H1 (cell line): ENCODE measurements at regions of chr16 and their contacts with region 1.

Region 1: GRCh38 chr16:50806099-50807062 is 64.5 kb downstream of the CYLD start:
- DNase-seq: peak; percentile 62 to 91
- H3K4me3 ChIP-seq: peak overlapping the region; percentile 18 to 53 (median 38); a peak in 7 of 8 replicates
- H3K27ac ChIP-seq: no peak overlapping the region
- H3K4me1 ChIP-seq: peaks cover 0 to 5% (median 0%) of the 10 kb centered on the region in 4 experiments; a peak in 2 of 7 replicates
- H3K27me3 ChIP-seq: no peaks in the 10 kb centered on the region
- CTCF ChIP-seq: peak; percentile 72 to 94 (median 73)
- EP300 ChIP-seq: no peak
- POLR2A ChIP-seq: no peak
- RAD21 ChIP-seq: peak; percentile 80 to 83

Region 2: DNA sequence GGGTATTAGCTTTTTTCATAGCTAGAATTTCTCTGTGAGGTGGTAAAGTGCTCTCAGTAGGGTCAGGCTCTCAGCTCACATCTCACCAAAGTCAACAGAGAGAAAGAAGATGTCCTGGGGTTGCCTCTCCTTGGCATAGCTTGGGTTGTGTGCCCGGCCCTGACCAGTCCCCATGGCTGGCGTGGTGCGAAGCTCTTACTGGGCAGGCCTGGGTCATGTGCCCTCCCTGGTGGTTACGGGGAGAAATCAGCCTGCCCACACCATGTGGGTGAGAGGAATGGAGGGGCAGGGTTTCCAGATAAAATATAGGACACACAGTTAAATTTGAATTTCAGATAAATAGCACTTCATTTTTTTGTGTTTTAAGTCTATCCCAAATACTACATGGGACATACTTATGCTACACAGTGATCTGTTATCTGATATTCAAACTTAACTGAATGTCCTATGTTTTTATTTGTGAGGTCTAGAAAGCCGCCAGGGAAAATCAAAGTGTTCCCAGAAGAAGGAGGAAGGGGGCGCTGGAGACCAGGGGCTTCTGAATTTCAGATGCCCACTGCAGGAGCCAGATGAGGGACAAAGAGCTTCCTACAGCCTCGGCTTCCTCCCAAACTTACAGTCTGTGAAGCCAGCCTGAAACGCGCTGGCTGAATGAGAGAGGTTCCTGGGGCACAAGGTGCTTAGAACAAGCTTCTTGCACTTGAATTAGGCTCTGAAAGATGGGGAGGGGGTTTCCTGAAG is 212.8 kb before region 1 on chr16:
- CTCF ChIA-PET with region 1: interaction called, 27 read pairs
- POLR2A ChIA-PET with region 1: no interaction called
- DNase-seq: peak; percentile 23 to 70
- H3K4me3 ChIP-seq: no peak overlapping the region
- H3K27ac ChIP-seq: no peak overlapping the region
- H3K4me1 ChIP-seq: peaks cover 0 to 19% (median 10%) of the 10 kb centered on the region in 4 experiments; a peak in 6 of 7 replicates
- H3K27me3 ChIP-seq: no peaks in the 10 kb centered on the region; a peak in 1 of 7 replicates
- CTCF ChIP-seq: peak; percentile 55 to 82 (median 69)
- EP300 ChIP-seq: no peak
- POLR2A ChIP-seq: no peak; a peak in 1 of 3 replicates
- RAD21 ChIP-seq: peak; percentile 78 to 85

Region 3: DNA sequence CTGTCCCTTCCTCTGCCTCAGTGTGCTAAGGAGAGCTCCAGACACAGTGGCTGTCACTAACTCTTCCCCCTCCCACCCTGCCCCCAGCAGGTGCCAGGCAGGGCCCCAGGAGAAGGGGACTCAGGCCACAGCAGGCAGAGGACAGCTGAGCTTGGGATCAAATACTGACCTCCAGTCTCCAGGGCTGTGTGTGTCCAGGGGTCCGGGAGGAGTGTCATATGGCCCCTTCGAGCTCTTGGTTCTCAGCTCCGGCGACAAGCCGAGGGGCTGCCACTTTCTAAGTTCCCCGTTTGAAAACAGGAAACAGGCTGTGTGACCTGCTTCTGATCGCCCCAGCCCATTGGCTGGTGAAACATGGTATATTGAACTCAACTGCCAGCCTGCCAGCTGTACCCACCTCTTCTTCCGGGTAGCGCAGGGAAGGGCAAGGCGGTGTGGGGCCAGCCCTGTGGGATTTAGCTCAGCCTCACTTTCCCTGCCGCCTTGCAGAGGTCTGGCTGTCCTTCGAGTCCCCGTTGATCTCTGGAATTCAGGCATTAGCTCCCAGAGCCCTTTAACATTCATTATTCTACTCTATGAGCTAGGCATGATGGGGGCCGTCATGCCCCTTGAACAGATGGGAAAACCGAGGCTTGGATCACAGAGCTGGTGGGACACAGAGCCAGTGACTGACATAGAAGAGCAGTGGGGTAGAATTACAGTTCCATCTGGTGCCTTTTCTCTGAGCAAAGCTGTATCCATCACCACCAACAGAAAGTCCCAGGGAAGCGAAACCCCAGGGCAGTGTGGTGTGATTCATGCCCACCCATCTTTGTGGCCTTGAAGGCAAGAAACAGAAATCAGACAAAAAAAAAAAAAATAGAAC is 125.1 kb before region 1 on chr16 and contains the start of gene SNX20:
- CTCF ChIA-PET with region 1: interaction called, 251 read pairs
- POLR2A ChIA-PET with region 1: no interaction called
- DNase-seq: no peak
- H3K4me3 ChIP-seq: no peak within 1 kb of the TSS
- H3K27ac ChIP-seq: no peak within 1 kb of the TSS
- H3K4me1 ChIP-seq: no peaks in the 10 kb centered on the region
- H3K27me3 ChIP-seq: no peaks in the 10 kb centered on the region
- CTCF ChIP-seq: no peak
- EP300 ChIP-seq: no peak
- POLR2A ChIP-seq: no peak
- RAD21 ChIP-seq: no peak
- total RNA-seq, gene SNX20: not detected in 2 replicates

Region 4: DNA sequence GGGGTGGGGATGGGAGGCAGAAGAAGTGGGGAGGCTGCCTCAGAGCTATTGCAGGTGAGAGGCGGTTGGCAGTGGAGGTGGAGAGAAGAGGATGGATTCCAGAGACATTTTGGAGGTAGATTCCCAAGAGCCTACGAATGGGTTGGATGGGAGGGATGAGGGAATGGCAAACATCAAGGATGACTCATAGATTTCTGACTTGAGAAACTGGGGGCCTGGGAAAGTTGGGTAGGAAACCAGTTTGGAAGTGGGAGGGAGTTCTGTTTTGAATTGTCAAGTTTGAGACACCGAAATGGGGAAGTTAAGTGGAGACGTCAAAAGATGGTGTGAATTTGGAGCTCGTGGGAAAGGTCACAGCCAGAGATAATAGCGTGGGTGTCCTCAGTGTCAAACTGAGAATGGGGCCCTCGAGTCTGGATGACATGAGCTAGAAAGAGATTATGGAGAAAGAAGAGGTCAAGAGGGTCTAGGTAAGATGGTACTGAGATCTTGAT is 70.7 kb before region 1 on chr16:
- CTCF ChIA-PET with region 1: interaction called, 16 read pairs
- POLR2A ChIA-PET with region 1: no interaction called
- DNase-seq: no peak
- H3K4me3 ChIP-seq: no peak overlapping the region
- H3K27ac ChIP-seq: no peak overlapping the region
- H3K4me1 ChIP-seq: no peaks in the 10 kb centered on the region
- H3K27me3 ChIP-seq: no peaks in the 10 kb centered on the region; a peak in 1 of 7 replicates
- CTCF ChIP-seq: no peak
- EP300 ChIP-seq: no peak
- POLR2A ChIP-seq: no peak
- RAD21 ChIP-seq: no peak

Region 5: DNA sequence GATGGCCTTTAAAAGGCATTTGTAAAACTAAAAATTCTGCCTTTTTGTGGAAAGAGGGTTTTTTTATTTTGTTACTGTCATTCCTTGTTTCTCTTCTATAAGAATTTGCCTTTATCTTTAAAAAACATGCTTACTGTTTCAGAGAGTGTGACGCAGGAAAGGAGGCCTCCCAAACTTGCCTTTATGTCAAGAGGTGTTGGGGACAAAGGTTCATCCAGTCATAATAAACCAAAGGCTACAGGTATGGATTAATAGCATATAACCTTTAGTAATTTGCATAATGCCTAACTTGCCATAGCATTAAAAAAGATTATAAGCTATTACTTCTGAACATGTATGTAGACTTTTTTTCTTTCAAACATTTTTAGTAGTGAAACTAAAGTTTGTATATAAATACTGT is 30.3 kb before region 1 on chr16:
- CTCF ChIA-PET with region 1: interaction called, 17 read pairs
- POLR2A ChIA-PET with region 1: no interaction called
- DNase-seq: no peak
- H3K4me3 ChIP-seq: no peak overlapping the region
- H3K27ac ChIP-seq: no peak overlapping the region
- H3K4me1 ChIP-seq: no peaks in the 10 kb centered on the region
- H3K27me3 ChIP-seq: no peaks in the 10 kb centered on the region
- CTCF ChIP-seq: no peak
- EP300 ChIP-seq: no peak
- POLR2A ChIP-seq: no peak
- RAD21 ChIP-seq: no peak

Region 6: DNA sequence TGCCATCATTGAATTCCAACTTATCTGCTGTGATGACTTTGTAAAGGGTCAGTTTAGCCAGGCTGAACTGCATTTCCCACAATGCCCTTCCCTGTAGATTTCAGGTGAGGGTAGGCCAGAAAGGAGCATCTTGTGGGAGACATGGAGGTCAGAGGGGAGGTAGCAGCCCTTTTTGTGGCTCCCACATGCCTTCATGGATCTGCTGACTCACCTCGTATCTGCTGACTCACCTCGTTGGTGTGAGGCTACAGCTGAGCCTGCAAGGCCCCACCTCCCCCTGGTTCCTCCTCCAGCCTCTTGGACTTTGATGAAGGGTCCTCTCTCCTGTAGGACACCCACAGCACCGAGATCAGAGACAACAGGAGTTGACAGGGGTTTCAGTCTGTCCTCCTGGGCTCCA is 242.2 kb after region 1 on chr16:
- CTCF ChIA-PET with region 1: interaction called, 13 read pairs
- POLR2A ChIA-PET with region 1: no interaction called
- DNase-seq: no peak
- H3K4me3 ChIP-seq: no peak overlapping the region
- H3K27ac ChIP-seq: no peak overlapping the region
- H3K4me1 ChIP-seq: peaks cover 0 to 3% (median 0%) of the 10 kb centered on the region in 4 experiments; a peak in 1 of 7 replicates
- H3K27me3 ChIP-seq: 0 out of 7 replicates have a peak, but pooled peaks cover 0 to 3% (median 0%) of the 10 kb centered on the region in 4 experiments
- CTCF ChIP-seq: no peak
- EP300 ChIP-seq: no peak
- POLR2A ChIP-seq: no peak
- RAD21 ChIP-seq: no peak